ENCODE measurements at regions of chr6 and their contacts with region 1.

Region 1: DNA sequence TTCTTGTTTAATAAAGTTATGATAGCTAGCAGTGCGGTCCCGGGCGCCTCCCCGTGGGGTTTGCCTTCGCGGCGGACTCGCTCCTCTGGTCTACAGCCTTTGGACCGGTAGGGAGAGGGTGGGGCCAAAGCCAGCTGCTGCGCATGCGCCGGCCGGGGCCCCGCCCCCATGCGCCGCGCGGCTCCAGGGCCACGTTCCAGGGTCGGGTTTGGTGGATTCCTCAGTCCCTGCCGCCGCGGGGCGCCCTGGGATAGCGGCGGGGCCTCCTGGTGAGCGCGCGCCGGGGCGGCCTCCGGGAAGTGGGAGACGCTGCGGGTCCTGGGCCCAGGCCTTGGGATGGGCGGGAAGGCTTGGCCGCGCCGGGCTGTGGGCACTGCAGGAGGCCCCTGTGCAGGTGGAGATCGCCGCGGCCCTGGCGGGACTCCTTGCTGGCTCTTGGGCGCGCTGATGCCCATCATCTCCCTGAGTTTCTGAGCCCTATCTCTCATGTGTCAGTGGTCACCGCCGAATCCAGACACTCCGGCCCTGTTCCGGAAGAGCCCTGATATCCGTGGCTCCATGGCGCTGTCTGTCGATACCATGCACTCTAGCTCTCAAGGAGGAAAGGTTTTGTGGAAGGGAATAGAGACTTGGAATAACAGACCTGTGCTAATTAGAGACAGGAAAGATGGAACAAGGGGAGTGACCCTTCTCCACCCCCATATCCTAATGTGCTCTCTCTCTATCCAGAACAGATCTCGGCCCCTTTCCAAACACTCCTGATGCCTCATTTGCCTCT is at the start of gene VARS2:
- DNase-seq: peak; percentile 36
- H3K4me3 ChIP-seq: peak within 1 kb of the TSS; percentile 47 to 80 (median 62)
- H3K27ac ChIP-seq: peak within 1 kb of the TSS; percentile 88 to 97 (median 95)
- H3K4me1 ChIP-seq: peaks cover 17 to 50% (median 25%) of the 10 kb centered on the region in 3 donors
- H3K27me3 ChIP-seq: no peaks in the 10 kb centered on the region
- CTCF ChIP-seq: peak; percentile 29 to 85 (median 58)
- POLR2A ChIP-seq: peak in 3 of 4 donors; percentile 70 to 91 (median 81)
- total RNA-seq, gene VARS2: 23.5 to 61.9 (median 33.0) TPM

Region 2: DNA sequence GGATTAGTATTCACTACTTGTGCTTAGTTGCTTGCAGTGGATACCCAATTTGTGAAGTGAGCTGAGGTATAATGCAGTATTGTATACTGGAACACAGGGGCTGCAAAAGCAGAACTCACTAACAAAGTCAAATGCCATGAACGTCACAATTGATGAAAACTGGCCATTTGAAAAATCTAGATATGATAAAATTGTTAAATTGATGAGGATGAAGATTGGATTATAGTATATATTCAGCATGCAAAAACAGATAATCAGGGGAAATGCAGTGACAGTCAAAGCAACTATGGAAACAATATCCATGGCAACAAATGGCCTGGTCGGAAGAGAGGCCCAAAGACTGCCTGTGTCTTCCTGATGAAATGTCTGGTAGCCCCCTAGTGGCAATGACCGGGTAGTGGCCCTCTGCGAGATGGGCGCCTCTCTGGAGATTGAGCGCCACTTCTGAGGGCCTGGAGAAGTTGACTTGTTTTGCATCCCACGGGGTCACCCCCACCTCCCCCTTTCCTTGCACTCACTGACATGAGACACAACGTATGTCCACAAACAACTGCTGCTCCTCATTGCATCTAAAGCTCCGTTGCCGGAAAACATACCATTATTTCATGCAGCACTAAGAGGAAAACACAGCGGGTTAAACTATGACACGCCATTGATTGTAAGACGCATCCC is 154.5 kb after region 1 on chr6:
- intact Hi-C with region 1: loop called (anchors 2 kb)
- DNase-seq: peak; percentile 18
- H3K4me3 ChIP-seq: no peak overlapping the region
- H3K27ac ChIP-seq: peak overlapping the region in 2 of 4 donors; percentile 30 to 57
- H3K4me1 ChIP-seq: peaks cover 0 to 71% (median 10%) of the 10 kb centered on the region in 3 donors
- H3K27me3 ChIP-seq: no peaks in the 10 kb centered on the region
- CTCF ChIP-seq: peak; percentile 78 to 93 (median 82)
- POLR2A ChIP-seq: no peak

Region 3: GRCh38 chr6:31197559-31198305 is 283.5 kb after region 1 on chr6:
- intact Hi-C with region 1: no loop called
- DNase-seq: peak; percentile 86
- H3K4me3 ChIP-seq: peak overlapping the region; percentile 43 to 75 (median 66)
- H3K27ac ChIP-seq: peak overlapping the region; percentile 92 to 97 (median 92)
- H3K4me1 ChIP-seq: peaks cover 5 to 32% (median 20%) of the 10 kb centered on the region in 3 donors
- H3K27me3 ChIP-seq: no peaks in the 10 kb centered on the region
- CTCF ChIP-seq: no peak
- POLR2A ChIP-seq: peak in 3 of 4 donors; percentile 52 to 75 (median 73)